AG04449 (cell line): ENCODE measurements at regions of chr15 and their contacts with region 1.

Region 1: GRCh38 chr15:92097474-92098178 is 244.1 kb downstream of the SLCO3A1 start:
- DNase-seq: no peak
- H3K4me3 ChIP-seq: no peak overlapping the region
- CTCF ChIP-seq: peak; percentile 73

Region 2: GRCh38 chr15:92205255-92205739 is 107.7 kb after region 1 on chr15:
- CTCF ChIA-PET with region 1: interaction called, 18 read pairs
- POLR2A ChIA-PET with region 1: no interaction called
- DNase-seq: no peak
- H3K4me3 ChIP-seq: no peak overlapping the region
- CTCF ChIP-seq: no peak

Region 3: DNA sequence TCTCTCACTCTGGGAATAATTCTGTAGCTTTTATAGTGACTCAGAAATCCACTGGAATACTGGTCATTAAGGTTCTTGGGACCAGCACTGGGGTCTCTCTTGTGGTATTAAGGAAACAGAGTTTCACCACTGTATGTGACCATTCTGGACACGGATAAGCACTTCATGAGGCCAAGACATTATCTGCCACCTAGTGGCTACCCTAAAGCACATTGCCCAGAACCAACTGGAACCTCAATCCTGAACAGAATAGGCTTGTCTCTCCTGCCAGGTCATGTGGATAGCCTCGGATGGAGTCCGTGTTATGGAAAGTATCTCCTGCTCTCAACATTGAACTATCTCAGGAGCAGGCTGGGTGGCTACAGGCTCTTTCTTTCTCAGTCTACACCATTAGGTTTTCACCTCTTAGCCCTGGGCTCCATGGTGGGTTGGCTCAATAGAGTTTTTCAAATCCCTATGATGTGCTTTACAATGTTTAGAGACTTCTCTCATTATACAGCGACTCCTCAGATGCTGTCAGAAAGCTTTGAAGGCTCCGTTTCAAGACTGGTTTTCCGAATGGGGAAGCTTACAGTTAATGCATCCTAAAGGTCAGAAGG is 128.5 kb after region 1 on chr15:
- CTCF ChIA-PET with region 1: interaction called, 44 read pairs
- POLR2A ChIA-PET with region 1: no interaction called
- DNase-seq: no peak
- H3K4me3 ChIP-seq: no peak overlapping the region
- CTCF ChIP-seq: peak; percentile 38